ENCODE measurements at regions of chr2 and their contacts with region 1.

Region 1: DNA sequence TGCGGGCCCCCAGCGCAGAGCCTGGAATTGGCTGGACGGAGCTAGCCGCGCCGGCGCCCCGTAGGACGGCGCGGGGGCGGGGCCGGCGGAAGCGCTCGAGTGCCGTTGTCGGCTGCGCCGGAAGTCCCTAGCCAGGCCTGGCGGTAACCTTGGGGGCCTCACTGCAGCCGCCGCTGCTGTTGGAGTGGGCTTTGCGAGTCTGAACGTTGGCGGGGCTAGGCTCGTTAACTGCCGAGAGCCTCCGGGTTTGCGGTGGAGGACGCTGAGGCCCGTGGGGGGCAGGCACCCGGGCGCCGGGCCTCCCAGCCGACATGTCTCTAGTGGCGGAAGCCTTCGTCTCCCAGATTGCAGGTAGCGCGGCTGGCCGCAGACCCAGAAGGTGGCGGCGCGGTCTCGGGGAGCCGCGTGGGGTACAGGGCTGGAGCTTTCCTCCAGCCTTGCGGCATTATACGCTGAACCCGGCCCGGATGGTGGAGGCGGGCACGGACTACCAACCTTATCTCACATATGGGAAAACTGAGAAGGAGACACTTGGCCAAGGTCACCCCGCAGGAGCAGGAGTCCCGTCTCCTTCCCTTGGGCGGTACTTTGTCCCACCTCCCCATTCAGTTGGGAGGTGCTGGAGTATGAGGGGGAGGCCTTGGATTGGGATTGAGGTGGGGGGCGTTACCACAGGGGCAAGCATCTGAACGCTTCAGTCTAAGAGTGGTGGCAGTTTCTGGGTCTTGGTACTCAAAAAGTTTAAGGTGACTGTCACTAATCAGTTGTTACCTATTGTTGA is at the start of gene MTX2:
- DNase-seq: peak; percentile 79
- H3K4me3 Mint-ChIP-seq: peak within 1 kb of the TSS; percentile 99
- H3K27ac Mint-ChIP-seq: peak within 1 kb of the TSS; percentile 99
- H3K4me1 Mint-ChIP-seq: peaks cover 16% of the 10 kb centered on the region
- H3K27me3 Mint-ChIP-seq: no peaks in the 10 kb centered on the region
- CTCF ChIP-seq: peak; percentile 11
- total RNA-seq, gene MTX2: 38.0 and 40.9 TPM in 2 replicates

Region 2: DNA sequence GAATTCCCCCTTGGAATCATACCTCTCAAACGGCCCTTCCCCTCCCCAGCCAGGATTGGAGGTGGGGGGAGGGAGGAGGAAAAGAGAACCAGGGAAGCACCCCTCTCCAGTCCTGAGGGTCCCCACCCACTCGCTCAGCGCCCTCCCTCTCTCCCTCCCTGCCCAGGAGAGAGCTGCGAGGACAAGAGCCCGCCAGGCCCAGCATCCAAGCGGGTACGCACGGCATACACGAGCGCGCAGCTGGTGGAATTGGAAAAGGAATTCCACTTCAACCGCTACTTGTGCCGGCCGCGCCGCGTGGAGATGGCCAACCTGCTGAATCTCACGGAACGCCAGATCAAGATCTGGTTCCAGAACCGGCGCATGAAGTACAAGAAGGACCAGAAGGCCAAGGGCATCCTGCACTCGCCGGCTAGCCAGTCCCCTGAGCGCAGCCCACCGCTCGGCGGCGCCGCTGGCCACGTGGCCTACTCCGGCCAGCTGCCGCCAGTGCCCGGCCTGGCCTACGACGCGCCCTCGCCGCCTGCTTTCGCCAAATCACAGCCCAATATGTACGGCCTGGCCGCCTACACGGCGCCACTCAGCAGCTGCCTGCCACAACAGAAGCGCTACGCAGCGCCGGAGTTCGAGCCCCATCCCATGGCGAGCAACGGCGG is 98.0 kb before region 1 on chr2:
- CTCF ChIA-PET with region 1: no interaction called
- POLR2A ChIA-PET with region 1: no interaction called
- intact Hi-C with region 1: no loop called
- DNase-seq: no peak
- H3K4me3 Mint-ChIP-seq: no peak overlapping the region
- H3K27ac Mint-ChIP-seq: no peak overlapping the region
- H3K4me1 Mint-ChIP-seq: no peaks in the 10 kb centered on the region
- H3K27me3 Mint-ChIP-seq: no peaks in the 10 kb centered on the region
- CTCF ChIP-seq: no peak

Region 3: GRCh38 chr2:176251928-176252327 is 17.6 kb before region 1 on chr2:
- CTCF ChIA-PET with region 1: interaction called, 5 read pairs
- POLR2A ChIA-PET with region 1: interaction called, 10 read pairs
- intact Hi-C with region 1: no loop called
- DNase-seq: peak; percentile 75
- H3K4me3 Mint-ChIP-seq: no peak overlapping the region
- H3K27ac Mint-ChIP-seq: no peak overlapping the region
- H3K4me1 Mint-ChIP-seq: peaks cover 8% of the 10 kb centered on the region
- H3K27me3 Mint-ChIP-seq: no peaks in the 10 kb centered on the region
- CTCF ChIP-seq: no peak